Ascending aorta (tissue), 2 donors: ENCODE measurements at regions of chr2 and their contacts with region 1.

Region 1: GRCh38 chr2:191369036-191369435 is 123.8 kb downstream of the MYO1B start:
- DNase-seq: no peak
- H3K4me3 ChIP-seq: no peak overlapping the region
- H3K27ac ChIP-seq: no peak overlapping the region
- H3K4me1 ChIP-seq: peaks cover 6 to 14% of the 10 kb centered on the region in 2 donors
- H3K27me3 ChIP-seq: no peaks in the 10 kb centered on the region
- CTCF ChIP-seq: peak in 2 of 3 experiments; percentile 7 to 29

Region 2: GRCh38 chr2:191265311-191266170 is 103.5 kb before region 1 on chr2:
- intact Hi-C with region 1: loop called (anchors 5 kb)
- DNase-seq: peak in 1 of 2 donors; percentile 79
- H3K4me3 ChIP-seq: peak overlapping the region in 1 of 2 donors; percentile 26
- H3K27ac ChIP-seq: peak overlapping the region; percentile 84 to 89
- H3K4me1 ChIP-seq: peaks cover 1 to 27% of the 10 kb centered on the region in 2 donors
- H3K27me3 ChIP-seq: no peaks in the 10 kb centered on the region
- CTCF ChIP-seq: no peak

Region 3: DNA sequence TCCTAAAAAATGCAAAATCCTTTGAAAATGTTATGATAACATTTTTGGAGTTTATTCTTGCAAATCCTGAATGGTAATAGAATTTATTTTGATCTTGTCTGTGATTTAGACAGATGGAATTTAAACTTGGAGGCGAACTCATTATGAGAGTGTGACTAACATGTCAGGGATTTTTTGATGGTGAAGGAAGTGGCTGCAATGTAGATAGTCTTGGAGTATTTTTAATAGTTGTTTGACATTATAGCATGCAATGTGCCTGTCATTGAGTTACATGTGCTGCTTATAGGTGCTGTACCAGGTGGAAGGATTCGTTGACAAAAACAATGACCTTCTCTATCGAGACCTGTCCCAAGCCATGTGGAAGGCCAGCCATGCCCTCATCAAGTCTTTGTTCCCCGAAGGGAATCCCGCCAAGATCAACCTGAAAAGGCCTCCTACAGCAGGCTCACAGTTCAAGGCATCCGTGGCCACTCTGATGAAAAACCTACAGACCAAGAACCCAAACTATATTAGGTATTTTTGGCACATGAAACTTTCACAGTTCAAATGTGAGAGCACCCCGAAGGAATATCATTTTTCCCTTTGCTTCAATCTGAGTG is 18.0 kb after region 1 on chr2:
- intact Hi-C with region 1: loop called (anchors 2 kb)
- DNase-seq: no peak
- H3K4me3 ChIP-seq: no peak overlapping the region
- H3K27ac ChIP-seq: peak overlapping the region; percentile 73 to 81
- H3K4me1 ChIP-seq: peaks cover 0 to 26% of the 10 kb centered on the region in 2 donors
- H3K27me3 ChIP-seq: no peaks in the 10 kb centered on the region
- CTCF ChIP-seq: no peak

Region 4: GRCh38 chr2:191404554-191404991 is 35.5 kb after region 1 on chr2:
- intact Hi-C with region 1: no loop called
- DNase-seq: no peak
- H3K4me3 ChIP-seq: no peak overlapping the region
- H3K27ac ChIP-seq: no peak overlapping the region
- H3K4me1 ChIP-seq: peaks cover 0 to 7% of the 10 kb centered on the region in 2 donors
- H3K27me3 ChIP-seq: no peaks in the 10 kb centered on the region
- CTCF ChIP-seq: no peak

Region 5: DNA sequence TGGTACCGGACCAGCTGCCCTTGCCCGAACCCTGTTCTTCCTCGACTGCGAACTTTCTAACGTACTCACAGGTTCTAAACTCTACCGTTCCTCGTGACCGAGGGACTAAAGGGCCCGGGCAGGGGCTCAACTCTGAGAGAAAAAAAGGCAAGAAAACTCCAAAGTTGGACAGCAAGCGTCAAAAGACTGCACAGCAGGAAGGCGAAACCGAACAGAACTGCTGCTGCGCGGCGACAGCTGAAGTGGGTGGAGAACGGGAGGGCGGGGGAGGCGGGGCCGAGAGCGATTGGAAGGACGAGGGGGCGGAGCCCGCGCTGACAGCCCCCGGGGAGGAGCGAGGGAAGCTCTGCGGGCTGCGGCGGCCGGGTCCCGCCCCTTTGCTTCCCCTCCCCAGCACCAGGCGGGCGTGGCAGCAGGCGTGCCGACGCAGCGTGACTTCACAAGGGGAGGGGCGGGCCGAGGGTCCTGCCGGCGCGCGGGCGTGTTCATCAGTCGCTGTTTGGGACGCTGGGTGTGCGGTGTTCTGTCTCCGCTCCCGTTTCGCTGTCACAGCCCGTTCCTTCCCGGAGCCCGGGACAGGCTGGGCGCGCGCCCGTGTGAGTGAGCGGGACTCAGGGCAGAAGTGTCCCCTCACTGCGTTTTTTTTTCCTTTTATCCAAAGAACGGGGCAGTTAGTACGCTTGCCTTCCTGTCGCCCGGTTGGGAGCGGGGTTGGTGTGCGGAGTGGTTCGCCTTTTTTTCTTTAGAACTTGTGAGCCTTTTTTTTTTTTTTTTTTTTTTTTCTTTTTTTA is 308.8 kb after region 1 on chr2 and contains the start of gene NABP1:
- intact Hi-C with region 1: loop called (anchors 10 kb)
- DNase-seq: peak; percentile 95 to 99
- H3K4me3 ChIP-seq: peak within 1 kb of the TSS; percentile 55 to 82
- H3K27ac ChIP-seq: peak within 1 kb of the TSS; percentile 90 to 96
- H3K4me1 ChIP-seq: peaks cover 4 to 10% of the 10 kb centered on the region in 2 donors
- H3K27me3 ChIP-seq: no peaks in the 10 kb centered on the region
- CTCF ChIP-seq: no peak
- total RNA-seq, gene NABP1: 38.5 TPM